ENCODE measurements at regions of chr14 and their contacts with region 1.

Region 1: GRCh38 chr14:77707724-77708408 is at the starts of genes ALKBH1 and SLIRP:
- DNase-seq: peak; percentile 82 to 91
- ATAC-seq: peak; percentile 99
- H3K4me3 ChIP-seq: peak within 1 kb of the TSS; percentile 89
- H3K27ac ChIP-seq: peak within 1 kb of the TSS; percentile 78 to 90
- H3K4me1 ChIP-seq: peaks cover 21% of the 10 kb centered on the region
- CTCF ChIP-seq: no peak
- EP300 ChIP-seq: no peak
- POLR2A ChIP-seq: peak; percentile 86
- RAD21 ChIP-seq: no peak
- polyA plus RNA-seq, gene ALKBH1: 24.1 and 24.5 TPM in 2 replicates
- polyA plus RNA-seq, gene SLIRP: 419 and 623 TPM in 2 replicates

Region 2: GRCh38 chr14:77436042-77436441 is 271.8 kb before region 1 on chr14:
- CTCF ChIA-PET with region 1: no interaction called
- POLR2A ChIA-PET with region 1: no interaction called
- DNase-seq: no peak
- ATAC-seq: no peak
- H3K4me3 ChIP-seq: no peak overlapping the region
- H3K27ac ChIP-seq: no peak overlapping the region
- H3K4me1 ChIP-seq: no peaks in the 10 kb centered on the region
- CTCF ChIP-seq: no peak
- EP300 ChIP-seq: no peak
- POLR2A ChIP-seq: no peak
- RAD21 ChIP-seq: no peak

Region 3: GRCh38 chr14:77616454-77617229 is 91.2 kb before region 1 on chr14 and contains the start of gene SPTLC2:
- CTCF ChIA-PET with region 1: no interaction called
- POLR2A ChIA-PET with region 1: no interaction called
- DNase-seq: peak; percentile 99 to 100
- ATAC-seq: peak; percentile 98 to 99
- H3K4me3 ChIP-seq: peak within 1 kb of the TSS; percentile 93
- H3K27ac ChIP-seq: peak within 1 kb of the TSS; percentile 83 to 96
- H3K4me1 ChIP-seq: peaks cover 29% of the 10 kb centered on the region
- CTCF ChIP-seq: 0 out of 3 replicates have a peak, but pooled peaks have one; percentile 10
- EP300 ChIP-seq: no peak
- POLR2A ChIP-seq: peak; percentile 92
- RAD21 ChIP-seq: no peak
- polyA plus RNA-seq, gene SPTLC2: 29.9 and 30.9 TPM in 2 replicates

Region 4: GRCh38 chr14:77691259-77691658 is 16.6 kb before region 1 on chr14:
- CTCF ChIA-PET with region 1: interaction called, 14 read pairs
- POLR2A ChIA-PET with region 1: no interaction called
- DNase-seq: no peak
- ATAC-seq: no peak
- H3K4me3 ChIP-seq: no peak overlapping the region
- H3K27ac ChIP-seq: no peak overlapping the region
- H3K4me1 ChIP-seq: no peaks in the 10 kb centered on the region
- CTCF ChIP-seq: no peak
- EP300 ChIP-seq: no peak
- POLR2A ChIP-seq: no peak
- RAD21 ChIP-seq: no peak

Region 5: DNA sequence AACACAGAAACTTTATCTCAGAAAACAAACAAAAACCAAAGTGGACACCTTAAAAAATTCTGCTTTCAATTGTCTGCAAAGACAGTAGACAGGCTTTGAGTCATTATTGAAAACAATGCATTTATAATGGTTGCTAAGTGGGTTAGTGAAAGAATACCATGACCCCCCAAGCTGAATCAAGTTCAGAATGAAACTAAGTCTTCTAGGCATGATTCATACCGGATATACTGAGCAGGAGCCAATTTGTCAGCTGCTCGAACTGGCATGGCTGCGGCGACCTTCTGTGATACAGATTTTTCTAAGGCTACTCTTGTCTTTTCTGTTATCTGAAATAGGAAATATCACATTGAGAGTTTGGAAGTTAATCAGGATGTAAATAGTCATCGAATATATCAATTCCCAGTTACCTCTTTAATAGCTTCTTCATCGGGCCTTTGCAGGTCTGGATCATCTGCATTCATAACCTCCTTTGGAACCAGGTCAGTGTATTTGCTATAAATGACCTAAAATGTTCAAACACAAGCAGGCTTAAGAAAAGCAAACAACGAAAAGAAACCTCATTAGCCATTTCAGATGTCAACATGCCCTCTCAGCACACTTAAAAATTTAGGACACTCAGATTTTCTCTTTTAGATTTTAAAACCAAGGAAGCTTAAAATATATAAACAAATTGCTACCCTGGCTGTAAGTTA is 30.8 kb after region 1 on chr14:
- CTCF ChIA-PET with region 1: no interaction called
- POLR2A ChIA-PET with region 1: interaction called, 10 read pairs
- DNase-seq: no peak
- ATAC-seq: no peak
- H3K4me3 ChIP-seq: no peak overlapping the region
- H3K27ac ChIP-seq: no peak overlapping the region
- H3K4me1 ChIP-seq: no peaks in the 10 kb centered on the region
- CTCF ChIP-seq: no peak
- EP300 ChIP-seq: no peak
- POLR2A ChIP-seq: no peak
- RAD21 ChIP-seq: no peak

Measured in A549 (cell line).